PC-3 (cell line): ENCODE measurements at regions of chr6 and their contacts with region 1.

Region 1: GRCh38 chr6:133523816-133524215 is 282.7 kb downstream of the EYA4 start:
- DNase-seq: no peak
- ATAC-seq: no peak
- H3K4me3 ChIP-seq: no peak overlapping the region
- H3K27ac ChIP-seq: no peak overlapping the region
- H3K4me1 ChIP-seq: no peaks in the 10 kb centered on the region
- H3K27me3 ChIP-seq: no peaks in the 10 kb centered on the region
- CTCF ChIP-seq: no peak

Region 2: GRCh38 chr6:133432021-133432989 is 91.5 kb before region 1 on chr6:
- CTCF ChIA-PET with region 1: no interaction called
- POLR2A ChIA-PET with region 1: no interaction called
- intact Hi-C with region 1: no loop called
- DNase-seq: no peak
- ATAC-seq: no peak
- H3K4me3 ChIP-seq: no peak overlapping the region
- H3K27ac ChIP-seq: no peak overlapping the region
- H3K4me1 ChIP-seq: peaks cover 7% of the 10 kb centered on the region
- H3K27me3 ChIP-seq: no peaks in the 10 kb centered on the region
- CTCF ChIP-seq: no peak

Region 3: DNA sequence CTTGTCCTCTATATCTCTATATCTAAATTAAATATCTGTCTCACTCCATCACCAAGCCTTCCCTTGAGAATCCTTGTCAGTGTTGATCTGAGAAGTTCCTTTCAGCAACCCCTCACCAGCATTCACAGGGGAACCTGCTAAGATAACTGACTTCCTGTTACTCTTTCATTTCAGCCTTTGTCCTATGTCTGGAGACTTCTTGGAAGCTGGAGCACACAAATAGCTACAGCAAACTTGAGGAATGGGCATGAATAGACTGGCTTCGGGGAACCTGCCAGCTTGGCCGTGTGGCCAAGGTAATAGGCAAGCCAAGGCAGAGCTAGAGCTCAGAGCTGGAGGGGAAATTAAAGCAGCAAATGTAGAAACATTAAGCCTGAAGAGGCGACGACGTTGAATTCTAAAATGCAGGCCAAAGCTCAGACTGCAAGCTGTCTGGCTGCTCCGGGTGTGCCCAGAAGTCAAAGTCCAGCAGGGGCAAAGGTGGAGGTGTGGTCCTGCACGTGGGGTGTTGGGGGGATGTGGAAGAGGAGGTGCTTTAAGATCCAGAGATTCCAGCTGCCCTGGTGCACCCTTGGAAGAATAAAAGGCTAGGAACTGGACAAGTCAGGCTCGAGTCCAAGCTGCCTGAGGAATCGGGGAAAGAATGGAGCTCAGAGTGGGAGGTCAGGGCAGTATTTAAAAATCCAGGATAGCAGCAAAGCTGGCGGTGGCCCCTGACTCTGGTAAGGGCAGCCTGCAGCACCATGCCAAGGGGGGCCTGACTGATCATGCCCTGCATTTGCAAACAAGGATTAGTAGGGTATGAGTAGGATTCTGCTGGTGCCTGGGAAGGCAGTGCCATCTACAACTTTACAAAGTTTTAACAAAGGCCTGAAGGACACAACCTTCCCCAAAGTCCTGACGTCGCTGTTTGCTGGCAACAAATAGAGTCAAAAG is 979.1 kb after region 1 on chr6:
- CTCF ChIA-PET with region 1: no interaction called
- POLR2A ChIA-PET with region 1: no interaction called
- intact Hi-C with region 1: loop called (anchors 10 kb)
- DNase-seq: no peak
- ATAC-seq: no peak
- H3K4me3 ChIP-seq: no peak overlapping the region
- H3K27ac ChIP-seq: no peak overlapping the region
- H3K4me1 ChIP-seq: no peaks in the 10 kb centered on the region
- H3K27me3 ChIP-seq: no peaks in the 10 kb centered on the region
- CTCF ChIP-seq: no peak